Naive thymus-derived CD4-positive, alpha-beta T cell (primary cell): ENCODE measurements at regions of chr1 and their contacts with region 1.

Region 1: GRCh38 chr1:110209715-110210603 is at the start of gene KCNC4:
- DNase-seq: peak; percentile 80 to 93 (median 91)
- ATAC-seq: peak; percentile 93
- H3K4me3 ChIP-seq: peak within 1 kb of the TSS; percentile 72
- H3K4me3 Mint-ChIP-seq: peak within 1 kb of the TSS; percentile 86 to 94 (median 88)
- H3K27ac ChIP-seq: peak within 1 kb of the TSS; percentile 89
- H3K27ac Mint-ChIP-seq: peak within 1 kb of the TSS; percentile 88 to 98 (median 95)
- H3K4me1 ChIP-seq: peaks cover 7 to 20% of the 10 kb centered on the region in 2 donors
- H3K4me1 Mint-ChIP-seq: peaks cover 31 to 61% (median 42%) of the 10 kb centered on the region in 7 donors
- H3K27me3 ChIP-seq: no peaks in the 10 kb centered on the region
- H3K27me3 Mint-ChIP-seq: peaks cover 0 to 16% (median 0%) of the 10 kb centered on the region in 5 donors
- total RNA-seq, gene KCNC4: 5.8 to 18.2 (median 12.4) TPM

Region 2: GRCh38 chr1:109041621-109042468 is 1168.1 kb before region 1 on chr1 and contains the start of gene WDR47:
- CTCF ChIA-PET with region 1: no interaction called
- POLR2A ChIA-PET with region 1: no interaction called
- intact Hi-C with region 1: loop called in 1 of 2 experiments (anchors 2 kb)
- DNase-seq: peak; percentile 95 to 97 (median 96)
- ATAC-seq: peak; percentile 99
- H3K4me3 ChIP-seq: peak within 1 kb of the TSS; percentile 97
- H3K4me3 Mint-ChIP-seq: peak within 1 kb of the TSS; percentile 86 to 97 (median 94)
- H3K27ac ChIP-seq: peak within 1 kb of the TSS; percentile 90
- H3K27ac Mint-ChIP-seq: peak within 1 kb of the TSS; percentile 78 to 97 (median 91)
- H3K4me1 ChIP-seq: peaks cover 0 to 7% of the 10 kb centered on the region in 2 donors
- H3K4me1 Mint-ChIP-seq: peaks cover 7 to 25% (median 16%) of the 10 kb centered on the region in 7 donors
- H3K27me3 ChIP-seq: no peaks in the 10 kb centered on the region
- H3K27me3 Mint-ChIP-seq: peaks cover 0 to 7% (median 0%) of the 10 kb centered on the region in 5 donors
- total RNA-seq, gene WDR47: 9.8 to 15.4 (median 14.4) TPM

Region 3: GRCh38 chr1:110245876-110246620 is 36.1 kb after region 1 on chr1:
- CTCF ChIA-PET with region 1: interaction called, 5 read pairs
- POLR2A ChIA-PET with region 1: no interaction called
- intact Hi-C with region 1: loop called in 1 of 2 experiments (anchors 5 kb)
- DNase-seq: no peak
- ATAC-seq: no peak
- H3K4me3 ChIP-seq: no peak overlapping the region
- H3K4me3 Mint-ChIP-seq: no peak overlapping the region
- H3K27ac ChIP-seq: no peak overlapping the region
- H3K27ac Mint-ChIP-seq: no peak overlapping the region
- H3K4me1 ChIP-seq: no peaks in the 10 kb centered on the region
- H3K4me1 Mint-ChIP-seq: peaks cover 0 to 3% (median 0%) of the 10 kb centered on the region in 7 donors
- H3K27me3 ChIP-seq: no peaks in the 10 kb centered on the region
- H3K27me3 Mint-ChIP-seq: no peaks in the 10 kb centered on the region

Region 4: DNA sequence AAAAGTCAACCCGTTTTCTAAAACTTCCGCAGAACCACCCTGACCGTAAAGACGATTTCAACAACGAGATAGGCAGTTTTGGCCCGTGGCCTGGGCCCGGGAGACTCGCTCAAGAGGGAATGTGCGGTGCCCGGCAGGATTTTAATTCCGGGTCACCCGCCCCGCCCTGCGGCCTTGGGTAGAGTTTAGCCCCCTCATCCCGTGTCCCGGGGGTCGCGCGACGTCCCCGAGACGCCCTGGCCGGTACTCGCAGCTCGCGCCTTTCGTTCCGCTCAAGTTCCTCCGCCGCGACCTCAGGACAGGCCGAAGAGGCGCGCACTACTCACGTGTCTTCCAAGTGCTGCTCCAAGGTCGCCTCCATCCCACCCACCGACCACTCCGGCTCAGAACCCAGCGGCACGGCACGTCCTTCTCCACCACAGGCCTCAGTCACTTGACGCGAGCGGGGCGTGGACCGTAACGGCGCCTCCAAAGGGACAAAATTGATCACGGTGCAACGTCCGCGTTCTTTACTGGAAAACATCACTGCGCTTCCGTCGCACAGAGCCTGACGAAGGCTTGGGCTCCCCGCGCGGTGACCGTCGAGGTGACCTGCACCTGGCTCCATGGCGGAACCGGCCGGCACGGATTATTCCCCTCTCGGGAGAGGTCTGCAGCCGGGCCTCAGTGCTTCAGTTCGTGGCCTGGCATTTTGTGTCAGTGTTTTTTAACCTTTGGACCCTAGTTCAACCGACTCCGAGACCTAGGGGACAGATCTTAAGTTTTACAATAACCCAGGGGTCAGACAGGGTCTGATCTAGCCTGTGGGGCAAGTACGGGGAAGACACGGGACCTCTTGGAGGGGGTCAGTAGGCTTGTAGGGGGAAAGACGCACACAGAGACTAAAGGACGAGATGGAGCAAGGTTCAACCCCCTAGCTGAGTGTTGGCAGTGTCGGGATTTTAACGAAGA is 197.6 kb after region 1 on chr1 and contains the start of gene LAMTOR5:
- CTCF ChIA-PET with region 1: interaction called, 8 read pairs
- POLR2A ChIA-PET with region 1: interaction called, 7 read pairs
- intact Hi-C with region 1: loop called (anchors 1 kb)
- DNase-seq: peak; percentile 77 to 91 (median 89)
- ATAC-seq: peak; percentile 98
- H3K4me3 ChIP-seq: peak within 1 kb of the TSS; percentile 95
- H3K4me3 Mint-ChIP-seq: peak within 1 kb of the TSS; percentile 88 to 100 (median 99)
- H3K27ac ChIP-seq: peak within 1 kb of the TSS; percentile 92
- H3K27ac Mint-ChIP-seq: peak within 1 kb of the TSS; percentile 96 to 100 (median 99)
- H3K4me1 ChIP-seq: peaks cover 19% of the 10 kb centered on the region in 2 donors
- H3K4me1 Mint-ChIP-seq: peaks cover 9 to 39% (median 27%) of the 10 kb centered on the region in 7 donors
- H3K27me3 ChIP-seq: no peaks in the 10 kb centered on the region
- H3K27me3 Mint-ChIP-seq: no peaks in the 10 kb centered on the region
- total RNA-seq, gene LAMTOR5: 63.3 to 146 (median 69.4) TPM

Region 5: DNA sequence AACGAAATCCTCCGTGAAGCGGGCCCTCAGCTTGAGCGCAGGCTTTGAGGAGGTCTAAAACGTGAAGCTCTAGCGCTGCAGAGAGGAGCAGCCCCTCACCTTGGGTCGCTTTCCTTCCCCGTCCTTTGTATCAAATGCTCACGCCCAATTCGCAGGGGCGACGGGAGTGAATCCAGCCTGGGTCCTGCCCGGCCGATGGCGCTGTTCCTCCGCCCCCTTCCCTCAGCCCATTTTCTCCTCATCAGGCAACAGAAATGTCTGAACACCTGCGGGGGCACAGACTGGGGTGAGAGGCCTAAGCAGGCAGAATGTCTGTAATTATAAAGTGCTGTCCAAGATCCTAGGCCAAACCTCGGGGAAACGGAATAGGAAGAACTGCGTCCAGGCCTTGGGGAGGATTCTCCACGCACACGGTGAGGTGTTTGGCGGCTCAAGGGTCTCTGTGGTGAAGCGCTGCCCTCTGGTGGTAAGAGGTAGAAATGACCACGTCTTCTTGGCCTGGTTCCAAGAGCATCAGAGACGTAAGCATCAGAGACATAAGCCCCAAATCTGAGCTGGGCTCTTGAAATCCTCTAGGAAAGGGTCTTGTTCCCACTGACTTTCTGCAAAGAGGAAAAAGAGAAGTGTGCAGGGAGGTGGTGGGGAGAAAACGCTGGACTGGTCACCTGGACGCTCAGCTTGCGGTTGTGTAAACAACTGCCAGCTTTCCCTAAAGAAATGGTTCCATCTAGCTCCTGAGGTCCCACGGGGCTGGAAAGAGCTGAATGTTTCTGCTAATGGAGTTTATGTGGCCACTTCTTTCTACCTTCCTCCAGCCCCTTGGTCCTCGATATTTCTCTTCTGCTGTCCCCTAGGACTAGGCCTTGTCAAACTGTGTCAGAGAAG is 570.9 kb after region 1 on chr1:
- CTCF ChIA-PET with region 1: no interaction called
- POLR2A ChIA-PET with region 1: no interaction called
- intact Hi-C with region 1: loop called in 1 of 2 experiments (anchors 5 kb)
- DNase-seq: peak; percentile 48 to 83 (median 74)
- ATAC-seq: peak; percentile 88
- H3K4me3 ChIP-seq: no peak overlapping the region
- H3K4me3 Mint-ChIP-seq: peak overlapping the region in 5 of 10 donors; percentile 29 to 61 (median 42)
- H3K27ac ChIP-seq: no peak overlapping the region
- H3K27ac Mint-ChIP-seq: peak overlapping the region in 5 of 9 donors; percentile 2 to 82 (median 34)
- H3K4me1 ChIP-seq: peaks cover 31 to 40% of the 10 kb centered on the region in 2 donors
- H3K4me1 Mint-ChIP-seq: peaks cover 18 to 54% (median 45%) of the 10 kb centered on the region in 7 donors
- H3K27me3 ChIP-seq: no peaks in the 10 kb centered on the region
- H3K27me3 Mint-ChIP-seq: peaks cover 0 to 28% (median 0%) of the 10 kb centered on the region in 5 donors

Region 6: GRCh38 chr1:111481387-111482221 is 1271.6 kb after region 1 on chr1:
- CTCF ChIA-PET with region 1: no interaction called
- POLR2A ChIA-PET with region 1: no interaction called
- intact Hi-C with region 1: loop called in 1 of 2 experiments (anchors 10 kb)
- DNase-seq: peak; percentile 23 to 65 (median 54)
- ATAC-seq: peak; percentile 80
- H3K4me3 ChIP-seq: no peak overlapping the region
- H3K4me3 Mint-ChIP-seq: peak overlapping the region in 1 of 10 donors; percentile 20
- H3K27ac ChIP-seq: no peak overlapping the region
- H3K27ac Mint-ChIP-seq: peak overlapping the region in 4 of 9 donors; percentile 22 to 86 (median 56)
- H3K4me1 ChIP-seq: peaks cover 22 to 25% of the 10 kb centered on the region in 2 donors
- H3K4me1 Mint-ChIP-seq: peaks cover 32 to 68% (median 53%) of the 10 kb centered on the region in 7 donors
- H3K27me3 ChIP-seq: no peaks in the 10 kb centered on the region
- H3K27me3 Mint-ChIP-seq: peaks cover 0 to 25% (median 0%) of the 10 kb centered on the region in 5 donors